Left ventricle myocardium superior (tissue), 1 donor: ENCODE measurements at regions of chr6 and their contacts with region 1.

Region 1: GRCh38 chr6:129498950-129499842 is 210.8 kb downstream of the ARHGAP18 start:
- DNase-seq: no peak
- ATAC-seq: peak; percentile 49

Region 2: GRCh38 chr6:129370268-129370916 is 128.8 kb before region 1 on chr6:
- intact Hi-C with region 1: no loop called
- DNase-seq: peak; percentile 30
- ATAC-seq: peak; percentile 39

Region 3: GRCh38 chr6:129381885-129382284 is 117.3 kb before region 1 on chr6:
- intact Hi-C with region 1: no loop called
- DNase-seq: no peak
- ATAC-seq: peak; percentile 64

Region 4: DNA sequence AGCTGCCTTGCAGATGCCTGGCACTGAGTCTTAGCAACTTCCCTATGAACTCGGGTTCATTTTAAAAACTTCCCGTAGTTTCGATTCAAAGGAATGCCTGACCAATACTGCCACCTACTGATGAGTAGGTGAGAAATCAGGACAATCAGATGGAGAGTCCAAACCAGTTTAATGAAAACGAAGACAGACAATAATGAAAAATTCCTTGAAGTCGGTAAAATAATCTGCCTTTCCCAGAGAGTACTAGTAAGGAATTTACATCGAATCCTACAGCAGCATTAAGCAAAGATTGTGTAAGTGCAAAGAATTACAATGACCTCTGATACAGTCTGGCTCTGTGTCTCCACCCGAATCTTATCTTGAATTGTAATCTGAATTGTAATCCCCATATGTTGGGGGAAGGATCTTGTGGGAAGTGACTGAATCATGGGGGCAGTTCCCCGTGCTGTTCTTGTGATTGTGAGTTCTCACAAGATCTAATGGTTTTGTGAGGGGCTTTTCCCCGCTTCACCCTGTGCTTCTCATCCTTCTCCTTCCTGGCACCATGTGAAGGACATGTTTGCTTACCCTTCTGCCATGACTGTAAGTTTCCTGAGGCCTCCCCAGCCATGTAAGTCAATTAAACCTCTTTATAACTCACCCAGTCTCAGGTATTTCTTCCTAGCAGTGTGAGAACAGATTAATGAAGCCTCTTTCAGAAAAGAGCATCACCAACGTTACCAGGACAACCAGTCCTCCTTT is 76.4 kb after region 1 on chr6:
- intact Hi-C with region 1: loop called (anchors 5 kb)
- DNase-seq: no peak
- ATAC-seq: peak; percentile 72